Activated B cell treated with CpG ODN at 0.5 μM for 24 hours (primary cell): ENCODE measurements at regions of chr11 and their contacts with region 1.

Region 1: DNA sequence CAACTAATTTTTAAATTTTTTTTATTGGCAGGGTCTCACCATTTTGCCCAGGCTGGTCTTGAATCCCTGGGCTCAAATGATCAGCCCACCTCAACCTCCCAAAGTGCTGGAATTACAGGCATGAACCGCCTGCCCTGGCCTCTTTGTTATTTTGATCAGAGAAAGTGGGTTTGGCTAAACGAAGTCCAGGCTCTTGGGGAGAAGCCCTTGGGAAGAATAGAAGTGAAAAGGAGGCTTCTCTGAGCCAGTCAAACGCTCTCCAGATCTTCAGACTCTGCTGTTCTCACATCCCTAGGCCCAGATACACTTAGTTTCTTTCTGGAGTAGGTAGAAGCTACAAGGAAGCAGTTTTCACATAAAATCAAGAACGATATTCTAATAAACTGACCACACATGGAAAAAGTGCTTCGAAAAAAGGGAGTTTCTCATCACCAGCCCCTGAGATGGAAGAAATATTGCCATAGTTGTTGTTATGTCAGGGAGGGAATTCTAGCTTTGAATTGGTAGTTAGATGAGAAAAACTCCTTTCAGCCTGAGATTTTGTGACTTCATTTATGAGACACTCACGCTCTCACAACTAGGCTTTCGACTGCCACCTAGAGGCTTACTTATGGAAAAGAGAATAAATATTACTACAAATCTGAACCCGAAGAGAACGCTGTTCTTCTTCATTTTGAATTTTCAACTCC is 41.7 kb upstream of the AQP11 start:
- DNase-seq: no peak
- ATAC-seq: peak; percentile 42
- H3K4me3 Mint-ChIP-seq: no peak overlapping the region
- H3K27ac Mint-ChIP-seq: no peak overlapping the region
- H3K4me1 Mint-ChIP-seq: peaks cover 2% of the 10 kb centered on the region
- H3K27me3 Mint-ChIP-seq: no peaks in the 10 kb centered on the region
- CTCF ChIP-seq: peak; percentile 70

Region 2: GRCh38 chr11:77127232-77127911 is 420.6 kb before region 1 on chr11:
- CTCF ChIA-PET with region 1: interaction called, 26 read pairs
- POLR2A ChIA-PET with region 1: no interaction called
- intact Hi-C with region 1: loop called (anchors 1 kb)
- DNase-seq: peak; percentile 57
- ATAC-seq: peak; percentile 76
- H3K4me3 Mint-ChIP-seq: peak overlapping the region; percentile 57
- H3K27ac Mint-ChIP-seq: no peak overlapping the region
- H3K4me1 Mint-ChIP-seq: peaks cover 19% of the 10 kb centered on the region
- H3K27me3 Mint-ChIP-seq: peaks cover 6% of the 10 kb centered on the region
- CTCF ChIP-seq: peak; percentile 24

Region 3: GRCh38 chr11:77187776-77188632 is 360.0 kb before region 1 on chr11:
- CTCF ChIA-PET with region 1: interaction called, 3 read pairs
- POLR2A ChIA-PET with region 1: no interaction called
- intact Hi-C with region 1: loop called (anchors 1 kb)
- DNase-seq: peak; percentile 35
- ATAC-seq: peak; percentile 54
- H3K4me3 Mint-ChIP-seq: no peak overlapping the region
- H3K27ac Mint-ChIP-seq: no peak overlapping the region
- H3K4me1 Mint-ChIP-seq: no peaks in the 10 kb centered on the region
- H3K27me3 Mint-ChIP-seq: no peaks in the 10 kb centered on the region
- CTCF ChIP-seq: peak; percentile 41

Region 4: DNA sequence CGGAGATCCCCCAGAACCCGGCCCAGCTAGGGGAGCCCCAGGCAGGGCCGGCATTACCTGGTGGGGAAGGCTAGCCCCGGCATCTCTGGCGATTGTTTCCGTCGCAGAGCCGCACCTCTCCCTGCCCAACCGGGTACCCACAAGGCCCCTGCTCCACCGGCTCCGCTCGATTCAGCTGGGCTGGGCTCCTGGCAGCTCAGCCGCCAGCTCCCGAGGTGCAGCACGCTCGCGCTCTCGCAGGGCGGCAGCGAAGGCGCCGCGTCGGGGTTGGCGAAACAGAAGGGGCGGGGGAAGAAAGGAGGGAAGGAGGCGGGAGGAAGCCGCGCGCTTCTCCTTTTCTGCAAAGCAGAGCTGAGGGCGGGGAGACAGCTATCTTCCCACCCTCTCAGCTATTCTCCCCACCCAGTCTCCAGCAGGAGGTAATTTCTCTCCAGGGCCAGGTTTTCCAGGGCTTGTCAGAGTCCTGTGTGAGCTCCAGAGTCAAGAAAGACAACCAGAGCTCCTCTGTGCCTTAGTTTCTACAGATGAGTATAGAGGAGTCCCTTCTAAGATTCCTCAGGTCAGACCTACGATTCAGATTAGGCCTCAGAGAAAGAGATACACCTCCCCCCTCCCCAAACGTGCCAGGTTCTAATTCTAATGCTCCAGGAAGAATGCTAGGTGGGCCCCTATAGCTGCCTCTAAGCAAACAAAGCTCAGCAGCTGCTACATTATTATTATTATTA is 136.1 kb before region 1 on chr11:
- CTCF ChIA-PET with region 1: interaction called, 3 read pairs
- POLR2A ChIA-PET with region 1: no interaction called
- intact Hi-C with region 1: loop called (anchors 5 kb)
- DNase-seq: peak; percentile 70
- ATAC-seq: peak; percentile 96
- H3K4me3 Mint-ChIP-seq: peak overlapping the region; percentile 94
- H3K27ac Mint-ChIP-seq: peak overlapping the region; percentile 85
- H3K4me1 Mint-ChIP-seq: peaks cover 23% of the 10 kb centered on the region
- H3K27me3 Mint-ChIP-seq: no peaks in the 10 kb centered on the region
- CTCF ChIP-seq: no peak

Region 5: DNA sequence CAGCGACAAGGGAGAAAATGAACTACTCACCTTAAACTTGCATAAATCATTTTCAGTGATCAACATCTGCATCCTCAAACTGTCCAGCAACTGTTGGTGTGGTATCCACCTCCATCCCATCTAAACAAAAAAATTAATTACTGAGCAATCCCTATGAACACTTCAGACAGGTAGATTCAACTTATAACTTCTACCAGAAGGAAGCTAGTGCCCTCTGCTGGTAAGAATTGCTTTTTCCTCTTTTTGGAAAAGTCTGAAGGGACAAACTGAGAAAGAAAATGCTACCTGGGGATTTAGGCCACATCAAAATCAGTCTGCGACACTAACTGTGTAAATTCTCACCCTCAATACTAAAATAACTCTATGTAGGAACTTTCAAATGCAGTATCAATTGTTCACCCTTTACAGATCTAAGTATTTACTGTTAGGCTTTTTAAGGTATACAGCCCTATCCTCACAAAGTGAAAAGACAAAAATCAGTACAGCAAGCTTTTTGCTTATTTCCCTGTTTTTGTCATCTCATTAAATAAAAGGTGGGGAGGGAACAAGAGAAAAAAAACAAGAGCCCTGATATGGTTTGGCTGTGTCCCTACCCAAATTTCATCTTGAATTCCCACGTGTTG is 71.7 kb after region 1 on chr11:
- CTCF ChIA-PET with region 1: no interaction called
- POLR2A ChIA-PET with region 1: no interaction called
- intact Hi-C with region 1: no loop called
- DNase-seq: no peak
- ATAC-seq: no peak
- H3K4me3 Mint-ChIP-seq: no peak overlapping the region
- H3K27ac Mint-ChIP-seq: no peak overlapping the region
- H3K4me1 Mint-ChIP-seq: no peaks in the 10 kb centered on the region
- H3K27me3 Mint-ChIP-seq: no peaks in the 10 kb centered on the region
- CTCF ChIP-seq: no peak